CD8-positive, alpha-beta T cell (primary cell): ENCODE measurements at regions of chr7 and their contacts with region 1.

Region 1: DNA sequence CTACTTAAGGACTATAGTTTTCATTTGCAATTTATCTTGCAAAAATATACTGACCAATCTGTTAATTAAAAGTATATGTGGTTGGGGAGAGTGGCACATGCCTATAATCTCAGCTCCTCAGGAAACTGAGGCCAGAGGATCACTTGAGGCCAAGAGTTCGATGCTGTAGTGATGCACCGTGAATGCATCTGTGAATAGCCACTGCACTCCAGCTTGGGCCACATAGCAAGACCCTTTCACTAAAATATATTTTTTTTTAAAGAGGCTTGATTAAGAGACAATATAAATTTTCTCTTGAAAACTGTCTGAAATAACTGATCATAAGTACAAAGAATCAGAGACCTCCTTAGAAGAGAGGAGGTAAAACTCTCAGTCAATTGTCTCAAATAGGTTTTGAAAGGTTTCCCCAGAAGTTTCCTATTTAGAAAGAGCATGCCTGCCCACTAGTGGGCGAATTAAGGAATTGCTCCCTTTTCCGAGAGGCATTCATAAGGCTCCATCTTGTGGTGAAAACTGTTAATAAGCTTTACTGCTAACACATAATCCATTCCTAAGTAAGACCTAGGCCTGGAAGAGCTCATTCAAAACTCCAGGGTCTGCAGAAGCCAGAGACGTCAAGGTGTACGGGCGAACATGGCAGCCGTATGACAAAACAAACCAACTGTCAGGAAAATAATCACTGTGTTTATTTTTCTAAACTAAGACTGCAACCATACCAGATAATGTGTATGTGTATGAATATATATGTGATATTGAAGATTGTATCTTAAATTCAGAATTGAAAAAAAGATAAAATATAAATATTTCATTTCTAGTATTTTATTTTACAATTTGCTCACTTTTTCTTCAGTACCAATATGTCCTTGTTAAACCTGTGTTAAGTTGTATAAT is 6.8 kb upstream of the TAS2R40 start:
- DNase-seq: peak; percentile 25 to 87 (median 59)
- ATAC-seq: peak; percentile 98
- H3K4me3 ChIP-seq: no peak overlapping the region
- H3K4me3 Mint-ChIP-seq: no peak overlapping the region
- H3K27ac ChIP-seq: no peak overlapping the region
- H3K27ac Mint-ChIP-seq: no peak overlapping the region
- H3K4me1 ChIP-seq: no peaks in the 10 kb centered on the region
- H3K4me1 Mint-ChIP-seq: no peaks in the 10 kb centered on the region
- H3K27me3 ChIP-seq: no peaks in the 10 kb centered on the region
- H3K27me3 Mint-ChIP-seq: peaks cover 4% of the 10 kb centered on the region
- CTCF ChIP-seq: peak; percentile 100

Region 2: DNA sequence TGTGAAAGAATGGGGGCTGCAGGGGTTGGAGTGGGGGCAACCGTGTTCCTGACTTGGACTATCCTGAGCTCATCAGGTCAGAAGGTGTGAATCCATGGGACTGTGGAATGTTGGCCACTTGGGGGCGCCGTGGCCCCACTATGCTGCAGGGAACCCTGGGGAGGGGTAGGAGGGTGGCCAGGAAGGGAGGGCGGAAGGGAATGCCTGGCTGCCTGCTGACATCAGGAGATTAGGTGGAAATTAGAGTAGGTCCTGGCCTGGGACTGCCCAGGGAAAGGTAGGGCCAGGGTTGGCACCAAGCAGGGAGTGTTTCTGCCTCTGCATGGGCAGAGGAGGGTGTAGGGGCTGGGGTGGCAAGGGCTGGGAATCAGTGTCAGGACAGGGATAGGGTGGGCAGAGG is 891.3 kb before region 1 on chr7:
- CTCF ChIA-PET with region 1: interaction called, 5 read pairs
- POLR2A ChIA-PET with region 1: no interaction called
- intact Hi-C with region 1: loop called (anchors 5 kb)
- DNase-seq: peak in 5 of 9 experiments; percentile 49 to 65 (median 52)
- ATAC-seq: peak; percentile 47
- H3K4me3 ChIP-seq: no peak overlapping the region
- H3K4me3 Mint-ChIP-seq: no peak overlapping the region
- H3K27ac ChIP-seq: no peak overlapping the region
- H3K27ac Mint-ChIP-seq: peak overlapping the region; percentile 86
- H3K4me1 ChIP-seq: peaks cover 8% of the 10 kb centered on the region
- H3K4me1 Mint-ChIP-seq: peaks cover 27% of the 10 kb centered on the region
- H3K27me3 ChIP-seq: no peaks in the 10 kb centered on the region
- H3K27me3 Mint-ChIP-seq: peaks cover 7% of the 10 kb centered on the region
- CTCF ChIP-seq: peak; percentile 51

Region 3: GRCh38 chr7:142535123-142535779 is 679.8 kb before region 1 on chr7:
- CTCF ChIA-PET with region 1: interaction called, 4 read pairs
- POLR2A ChIA-PET with region 1: no interaction called
- intact Hi-C with region 1: loop called in 1 of 2 experiments (anchors 10 kb)
- DNase-seq: peak; percentile 24 to 82 (median 68)
- ATAC-seq: peak; percentile 77
- H3K4me3 ChIP-seq: peak overlapping the region; percentile 20 to 22
- H3K4me3 Mint-ChIP-seq: peak overlapping the region; percentile 38
- H3K27ac ChIP-seq: peak overlapping the region; percentile 42 to 46
- H3K27ac Mint-ChIP-seq: peak overlapping the region; percentile 73
- H3K4me1 ChIP-seq: peaks cover 24% of the 10 kb centered on the region
- H3K4me1 Mint-ChIP-seq: peaks cover 29% of the 10 kb centered on the region
- H3K27me3 ChIP-seq: no peaks in the 10 kb centered on the region
- H3K27me3 Mint-ChIP-seq: no peaks in the 10 kb centered on the region
- CTCF ChIP-seq: no peak

Region 4: GRCh38 chr7:142853739-142854371 is 361.2 kb before region 1 on chr7:
- CTCF ChIA-PET with region 1: interaction called, 13 read pairs
- POLR2A ChIA-PET with region 1: no interaction called
- intact Hi-C with region 1: loop called (anchors 1 to 2 kb)
- DNase-seq: peak; percentile 36 to 82 (median 64)
- ATAC-seq: peak; percentile 76
- H3K4me3 ChIP-seq: peak overlapping the region; percentile 58 to 79
- H3K4me3 Mint-ChIP-seq: peak overlapping the region; percentile 98
- H3K27ac ChIP-seq: peak overlapping the region in 1 of 2 experiments; percentile 41
- H3K27ac Mint-ChIP-seq: peak overlapping the region; percentile 91
- H3K4me1 ChIP-seq: peaks cover 9% of the 10 kb centered on the region
- H3K4me1 Mint-ChIP-seq: peaks cover 14% of the 10 kb centered on the region
- H3K27me3 ChIP-seq: no peaks in the 10 kb centered on the region
- H3K27me3 Mint-ChIP-seq: no peaks in the 10 kb centered on the region
- CTCF ChIP-seq: peak; percentile 77

Region 5: GRCh38 chr7:143203386-143203785 is 11.6 kb before region 1 on chr7:
- CTCF ChIA-PET with region 1: interaction called, 14 read pairs
- POLR2A ChIA-PET with region 1: no interaction called
- intact Hi-C with region 1: no loop called
- DNase-seq: no peak
- ATAC-seq: no peak
- H3K4me3 ChIP-seq: no peak overlapping the region
- H3K4me3 Mint-ChIP-seq: no peak overlapping the region
- H3K27ac ChIP-seq: no peak overlapping the region
- H3K27ac Mint-ChIP-seq: no peak overlapping the region
- H3K4me1 ChIP-seq: peaks cover 17% of the 10 kb centered on the region
- H3K4me1 Mint-ChIP-seq: peaks cover 16% of the 10 kb centered on the region
- H3K27me3 ChIP-seq: no peaks in the 10 kb centered on the region
- H3K27me3 Mint-ChIP-seq: peaks cover 19% of the 10 kb centered on the region
- CTCF ChIP-seq: no peak